PC-3 (cell line): ENCODE measurements at regions of chr5 and their contacts with region 1.

Region 1: DNA sequence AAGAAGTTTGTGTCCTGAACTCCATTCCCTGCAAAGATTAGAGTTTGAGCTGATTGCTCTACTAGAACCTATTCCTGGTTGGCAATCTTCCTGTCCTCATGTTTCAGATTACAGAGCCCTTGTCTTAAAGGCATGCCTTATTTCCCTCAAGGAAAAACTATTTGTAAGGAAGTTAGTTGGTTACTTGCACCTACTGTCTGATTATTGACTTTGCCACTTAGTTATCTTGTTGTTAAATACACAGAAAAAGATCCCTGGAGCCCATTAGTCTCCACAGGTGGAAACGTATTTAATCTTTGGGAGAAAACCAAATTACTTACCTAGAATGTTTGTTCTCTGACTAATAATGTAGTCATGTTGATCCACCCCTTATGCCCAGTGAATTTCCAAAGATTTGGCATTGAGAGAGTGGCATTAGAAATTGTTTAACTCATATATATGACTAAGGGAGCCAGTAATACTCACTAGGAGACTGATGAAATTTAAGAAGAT is 132.3 kb upstream of the ELL2 start:
- DNase-seq: peak; percentile 95
- ATAC-seq: peak; percentile 90
- H3K4me3 ChIP-seq: no peak overlapping the region
- H3K27ac ChIP-seq: peak overlapping the region; percentile 85
- H3K4me1 ChIP-seq: peaks cover 43% of the 10 kb centered on the region
- H3K27me3 ChIP-seq: no peaks in the 10 kb centered on the region
- CTCF ChIP-seq: no peak

Region 2: DNA sequence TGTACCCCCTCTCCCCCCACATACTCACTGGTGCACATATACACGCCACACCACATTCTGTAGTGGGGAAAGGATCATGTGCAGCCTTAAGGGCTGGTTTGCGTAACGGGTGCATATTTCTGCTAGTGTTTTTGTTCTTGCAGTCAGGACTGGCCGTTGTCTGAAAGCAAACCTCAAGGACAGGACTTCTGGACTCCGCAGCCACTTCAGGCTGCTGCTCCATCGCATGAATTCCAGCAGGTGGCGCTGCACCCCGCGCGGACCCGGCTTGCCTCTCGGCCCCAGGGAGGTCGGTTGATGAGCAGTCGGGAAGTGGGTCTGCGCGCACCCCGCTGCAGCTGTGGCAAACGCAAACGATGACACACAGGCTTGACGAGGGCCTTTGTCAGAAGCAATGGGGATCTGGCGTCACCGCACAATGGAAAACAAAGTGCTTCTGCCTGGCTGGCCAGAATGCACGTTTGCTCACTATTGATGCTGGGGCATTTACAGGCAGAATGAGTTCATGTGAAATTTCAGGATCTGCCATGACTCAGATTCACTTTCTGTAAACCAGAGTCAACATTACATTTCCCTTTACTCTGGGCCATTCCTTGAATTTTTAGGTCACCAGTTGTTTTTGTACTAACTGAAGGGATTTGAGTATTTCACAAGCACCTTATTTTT is 235.1 kb before region 1 on chr5:
- CTCF ChIA-PET with region 1: no interaction called
- POLR2A ChIA-PET with region 1: no interaction called
- intact Hi-C with region 1: loop called (anchors 2 kb)
- DNase-seq: peak; percentile 93
- ATAC-seq: peak; percentile 68
- H3K4me3 ChIP-seq: peak overlapping the region; percentile 56
- H3K27ac ChIP-seq: peak overlapping the region; percentile 99
- H3K4me1 ChIP-seq: peaks cover 49% of the 10 kb centered on the region
- H3K27me3 ChIP-seq: no peaks in the 10 kb centered on the region
- CTCF ChIP-seq: peak; percentile 91

Region 3: DNA sequence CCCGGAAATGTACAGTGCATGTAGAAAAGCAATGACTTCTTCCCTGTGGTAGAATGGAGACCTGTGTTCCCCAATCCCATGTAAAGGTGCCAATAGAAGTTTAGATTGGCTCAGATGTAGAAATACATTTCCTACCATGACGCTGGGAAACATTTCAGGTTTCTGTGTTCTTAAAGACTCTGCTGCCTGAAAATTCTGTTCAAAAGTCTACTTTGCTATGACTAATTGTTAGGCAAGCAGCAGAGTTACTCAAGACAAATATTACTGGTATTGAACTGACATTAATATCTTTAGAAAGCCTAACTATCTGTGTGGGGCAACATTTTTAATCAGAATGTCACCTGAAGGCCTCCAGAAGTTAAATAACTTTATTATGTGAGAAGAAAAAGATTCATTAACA is 56.8 kb before region 1 on chr5:
- CTCF ChIA-PET with region 1: no interaction called
- POLR2A ChIA-PET with region 1: no interaction called
- intact Hi-C with region 1: loop called (anchors 1 kb)
- DNase-seq: peak; percentile 80
- ATAC-seq: peak; percentile 60
- H3K4me3 ChIP-seq: peak overlapping the region; percentile 49; the same call in 1 of the 2 replicates
- H3K27ac ChIP-seq: peak overlapping the region; percentile 98
- H3K4me1 ChIP-seq: peaks cover 36% of the 10 kb centered on the region
- H3K27me3 ChIP-seq: no peaks in the 10 kb centered on the region
- CTCF ChIP-seq: no peak

Region 4: GRCh38 chr5:96226941-96227552 is 133.1 kb after region 1 on chr5:
- CTCF ChIA-PET with region 1: no interaction called
- POLR2A ChIA-PET with region 1: no interaction called
- intact Hi-C with region 1: loop called (anchors 1 kb)
- DNase-seq: peak; percentile 80
- ATAC-seq: peak; percentile 86
- H3K4me3 ChIP-seq: no peak overlapping the region
- H3K27ac ChIP-seq: peak overlapping the region; percentile 84
- H3K4me1 ChIP-seq: peaks cover 28% of the 10 kb centered on the region
- H3K27me3 ChIP-seq: no peaks in the 10 kb centered on the region
- CTCF ChIP-seq: no peak